WTC11 (cell line): ENCODE measurements at regions of chr6 and their contacts with region 1.

Region 1: GRCh38 chr6:138211027-138211581 is 7.2 kb downstream of the PBOV1 start:
- DNase-seq: no peak
- ATAC-seq: peak; percentile 61
- H3K4me3 Mint-ChIP-seq: no peak overlapping the region
- H3K27ac Mint-ChIP-seq: no peak overlapping the region
- H3K4me1 Mint-ChIP-seq: peaks cover 21% of the 10 kb centered on the region
- H3K27me3 Mint-ChIP-seq: no peaks in the 10 kb centered on the region
- CTCF ChIP-seq: no peak

Region 2: GRCh38 chr6:138129190-138129589 is 81.9 kb before region 1 on chr6:
- CTCF ChIA-PET with region 1: interaction called, 15 read pairs
- POLR2A ChIA-PET with region 1: no interaction called
- DNase-seq: peak; percentile 25
- ATAC-seq: peak; percentile 89
- H3K4me3 Mint-ChIP-seq: no peak overlapping the region
- H3K27ac Mint-ChIP-seq: no peak overlapping the region
- H3K4me1 Mint-ChIP-seq: peaks cover 5% of the 10 kb centered on the region; the same call in 1 of the 2 replicates
- H3K27me3 Mint-ChIP-seq: no peaks in the 10 kb centered on the region
- CTCF ChIP-seq: no peak

Region 3: DNA sequence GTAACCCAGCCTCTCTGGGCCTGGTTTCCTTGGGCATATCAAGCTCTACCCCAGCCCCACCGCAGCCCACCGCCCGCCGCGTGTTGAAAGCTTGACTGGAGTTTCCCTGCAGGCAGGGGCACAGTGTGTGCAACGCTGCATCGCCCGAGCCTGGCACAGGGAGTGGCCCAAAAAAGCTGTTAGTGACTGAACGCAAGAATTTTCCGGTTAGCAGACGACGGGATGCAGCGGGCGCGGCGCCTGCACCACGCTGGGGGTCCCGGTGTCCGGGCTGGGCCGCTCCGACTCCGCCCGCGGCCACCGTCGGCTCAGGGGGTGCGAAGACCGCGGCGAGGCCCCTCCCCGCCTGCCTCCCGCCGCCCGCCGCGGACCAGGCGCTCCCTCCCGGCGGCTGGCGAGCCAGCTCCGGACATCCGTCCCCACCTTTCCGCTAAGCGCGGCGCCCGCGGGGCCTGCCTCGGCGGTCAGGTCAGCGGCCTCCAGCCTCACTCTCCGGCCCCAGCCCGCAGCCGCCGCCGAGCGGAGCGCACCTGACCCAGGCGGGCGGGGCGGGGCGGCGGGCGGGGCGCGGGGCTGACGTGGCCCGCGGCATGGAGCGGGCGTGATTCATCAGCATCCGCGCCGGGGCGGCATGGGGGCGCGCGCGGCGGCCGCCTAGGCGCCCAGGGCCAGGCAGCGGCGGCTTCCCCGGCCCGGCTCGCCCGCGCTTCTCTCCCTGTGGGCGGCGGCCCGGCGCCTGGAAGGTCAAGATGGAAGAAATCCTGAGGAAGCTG is 49.6 kb before region 1 on chr6 and contains the start of gene ARFGEF3:
- CTCF ChIA-PET with region 1: interaction called, 14 read pairs
- POLR2A ChIA-PET with region 1: interaction called, 5 read pairs
- DNase-seq: peak; percentile 75
- ATAC-seq: peak; percentile 83
- H3K4me3 Mint-ChIP-seq: peak within 1 kb of the TSS; percentile 83
- H3K27ac Mint-ChIP-seq: 0 out of 2 replicates have a peak within 1 kb of the TSS, but pooled peaks have one; percentile 37
- H3K4me1 Mint-ChIP-seq: peaks cover 30% of the 10 kb centered on the region
- H3K27me3 Mint-ChIP-seq: peaks cover 25% of the 10 kb centered on the region
- CTCF ChIP-seq: no peak
- total RNA-seq, gene ARFGEF3: 20.0 to 20.5 TPM (median 20.1 TPM) in 3 replicates